Activated CD8-positive, alpha-beta T cell treated with anti-CD3 and anti-CD28 coated beads, Interleukin-2, amount 10 ng/mL, durations not matched to agents 7 days and 5 days (primary cell): ENCODE measurements at regions of chr4 and their contacts with region 1.

Region 1: GRCh38 chr4:165343353-165344191 is 16.1 kb downstream of the MSMO1 start:
- DNase-seq: no peak
- ATAC-seq: no peak
- H3K4me3 Mint-ChIP-seq: no peak overlapping the region
- H3K27ac Mint-ChIP-seq: no peak overlapping the region
- H3K4me1 Mint-ChIP-seq: peaks cover 7% of the 10 kb centered on the region
- H3K27me3 Mint-ChIP-seq: no peaks in the 10 kb centered on the region

Region 2: GRCh38 chr4:165327211-165328100 is 16.1 kb before region 1 on chr4 and contains the start of gene MSMO1:
- CTCF ChIA-PET with region 1: interaction called, 13 read pairs
- POLR2A ChIA-PET with region 1: no interaction called
- DNase-seq: peak; percentile 99
- ATAC-seq: peak; percentile 99
- H3K4me3 Mint-ChIP-seq: no peak within 1 kb of the TSS
- H3K27ac Mint-ChIP-seq: peak within 1 kb of the TSS; percentile 60
- H3K4me1 Mint-ChIP-seq: peaks cover 41% of the 10 kb centered on the region
- H3K27me3 Mint-ChIP-seq: no peaks in the 10 kb centered on the region
- total RNA-seq, gene MSMO1: 47.4 to 51.6 TPM

Region 3: GRCh38 chr4:165355900-165356300 is 12.3 kb after region 1 on chr4:
- CTCF ChIA-PET with region 1: interaction called, 17 read pairs
- POLR2A ChIA-PET with region 1: no interaction called
- DNase-seq: peak; percentile 37
- ATAC-seq: no peak
- H3K4me3 Mint-ChIP-seq: no peak overlapping the region
- H3K27ac Mint-ChIP-seq: no peak overlapping the region
- H3K4me1 Mint-ChIP-seq: peaks cover 2% of the 10 kb centered on the region
- H3K27me3 Mint-ChIP-seq: peaks cover 32% of the 10 kb centered on the region

Region 4: DNA sequence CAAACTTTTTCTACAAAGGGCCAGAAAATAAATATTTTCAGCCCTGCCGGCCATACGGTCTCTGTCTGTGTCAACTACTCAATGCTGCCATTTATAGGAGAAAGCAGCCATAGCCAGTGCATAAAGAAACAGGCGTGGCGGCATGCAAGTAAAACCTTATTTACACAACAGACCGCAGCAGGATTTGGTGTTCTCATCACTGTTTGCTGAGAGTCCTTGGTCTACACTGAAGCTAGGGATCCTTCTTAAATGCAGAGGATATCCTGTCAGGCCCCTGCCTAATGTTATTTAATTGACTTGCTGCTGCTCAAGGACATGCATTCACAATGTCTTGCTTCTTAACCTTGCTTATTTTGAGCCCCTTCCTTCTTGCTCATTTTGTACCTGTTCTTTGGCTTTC is 90.0 kb after region 1 on chr4:
- CTCF ChIA-PET with region 1: no interaction called
- POLR2A ChIA-PET with region 1: no interaction called
- DNase-seq: no peak
- ATAC-seq: no peak
- H3K4me3 Mint-ChIP-seq: no peak overlapping the region
- H3K27ac Mint-ChIP-seq: no peak overlapping the region
- H3K4me1 Mint-ChIP-seq: no peaks in the 10 kb centered on the region
- H3K27me3 Mint-ChIP-seq: peaks cover 12% of the 10 kb centered on the region

Region 5: GRCh38 chr4:165512424-165512823 is 168.9 kb after region 1 on chr4:
- CTCF ChIA-PET with region 1: no interaction called
- POLR2A ChIA-PET with region 1: no interaction called
- DNase-seq: no peak
- ATAC-seq: no peak
- H3K4me3 Mint-ChIP-seq: no peak overlapping the region
- H3K27ac Mint-ChIP-seq: no peak overlapping the region
- H3K4me1 Mint-ChIP-seq: no peaks in the 10 kb centered on the region
- H3K27me3 Mint-ChIP-seq: peaks cover 6% of the 10 kb centered on the region